ENCODE measurements at regions of chr4 and their contacts with region 1.

Region 1: DNA sequence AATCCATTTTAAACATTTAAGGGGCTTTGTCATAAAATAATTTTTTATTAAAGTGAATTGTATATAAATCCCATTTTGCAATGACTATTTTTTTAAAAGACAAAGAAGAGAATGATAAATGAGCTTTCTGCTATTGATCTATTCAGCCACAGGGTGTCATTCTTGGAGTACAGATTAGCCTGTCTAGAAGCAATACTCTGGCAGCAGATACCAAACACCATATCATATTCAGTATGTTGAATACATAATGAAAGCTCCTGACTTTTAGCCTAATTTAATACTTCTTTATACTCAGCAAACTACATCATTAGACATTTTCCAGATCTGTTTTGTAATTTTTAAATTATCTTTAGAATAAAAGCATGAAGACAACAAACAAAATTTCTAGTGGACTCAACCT is 496.3 kb downstream of the PDGFC start:
- DNase-seq: peak; percentile 42
- ATAC-seq: peak; percentile 73
- H3K4me3 ChIP-seq: no peak overlapping the region
- H3K27ac ChIP-seq: no peak overlapping the region
- H3K4me1 ChIP-seq: peaks cover 0 to 16% of the 10 kb centered on the region in 2 experiments; a peak in 2 of 4 replicates
- H3K27me3 ChIP-seq: no peaks in the 10 kb centered on the region
- CTCF ChIP-seq: peak; percentile 28 to 61 (median 54); a peak in 4 of 6 replicates
- POLR2A ChIP-seq: no peak
- RAD21 ChIP-seq: peak; percentile 86

Region 2: GRCh38 chr4:156677131-156677531 is 201.8 kb after region 1 on chr4:
- CTCF ChIA-PET with region 1: interaction called, 8 read pairs
- POLR2A ChIA-PET with region 1: no interaction called
- RAD21 ChIA-PET with region 1: no interaction called
- intact Hi-C with region 1: loop called (anchors 1 kb)
- DNase-seq: peak; percentile 64
- ATAC-seq: peak; percentile 80
- H3K4me3 ChIP-seq: no peak overlapping the region
- H3K27ac ChIP-seq: no peak overlapping the region
- H3K4me1 ChIP-seq: peaks cover 0 to 19% of the 10 kb centered on the region in 2 experiments; a peak in 2 of 4 replicates
- H3K27me3 ChIP-seq: no peaks in the 10 kb centered on the region
- CTCF ChIP-seq: peak; percentile 39 to 63 (median 63); a peak in 4 of 6 replicates
- POLR2A ChIP-seq: no peak
- RAD21 ChIP-seq: peak; percentile 82

Region 3: GRCh38 chr4:157045507-157046127 is 570.3 kb after region 1 on chr4:
- CTCF ChIA-PET with region 1: interaction called, 23 read pairs
- POLR2A ChIA-PET with region 1: no interaction called
- RAD21 ChIA-PET with region 1: interaction called, 4 to 9 read pairs
- intact Hi-C with region 1: loop called (anchors 1 kb)
- DNase-seq: peak; percentile 46
- ATAC-seq: peak; percentile 95
- H3K4me3 ChIP-seq: no peak overlapping the region
- H3K27ac ChIP-seq: no peak overlapping the region
- H3K4me1 ChIP-seq: no peaks in the 10 kb centered on the region
- H3K27me3 ChIP-seq: no peaks in the 10 kb centered on the region
- CTCF ChIP-seq: peak; percentile 67 to 79 (median 70)
- POLR2A ChIP-seq: no peak
- RAD21 ChIP-seq: peak; percentile 82

Region 4: GRCh38 chr4:157220371-157220881 is 745.1 kb after region 1 on chr4 and contains the start of gene GRIA2:
- CTCF ChIA-PET with region 1: no interaction called
- POLR2A ChIA-PET with region 1: no interaction called
- RAD21 ChIA-PET with region 1: no interaction called
- intact Hi-C with region 1: loop called (anchors 10 kb)
- DNase-seq: no peak
- ATAC-seq: no peak
- H3K4me3 ChIP-seq: no peak within 1 kb of the TSS
- H3K27ac ChIP-seq: no peak within 1 kb of the TSS
- H3K4me1 ChIP-seq: no peaks in the 10 kb centered on the region
- H3K27me3 ChIP-seq: no peaks in the 10 kb centered on the region
- CTCF ChIP-seq: no peak
- POLR2A ChIP-seq: no peak
- RAD21 ChIP-seq: no peak
- total RNA-seq, gene GRIA2: not detected

Measured in HCT116 (cell line).